ENCODE measurements at regions of chr1 and their contacts with region 1.

Region 1: DNA sequence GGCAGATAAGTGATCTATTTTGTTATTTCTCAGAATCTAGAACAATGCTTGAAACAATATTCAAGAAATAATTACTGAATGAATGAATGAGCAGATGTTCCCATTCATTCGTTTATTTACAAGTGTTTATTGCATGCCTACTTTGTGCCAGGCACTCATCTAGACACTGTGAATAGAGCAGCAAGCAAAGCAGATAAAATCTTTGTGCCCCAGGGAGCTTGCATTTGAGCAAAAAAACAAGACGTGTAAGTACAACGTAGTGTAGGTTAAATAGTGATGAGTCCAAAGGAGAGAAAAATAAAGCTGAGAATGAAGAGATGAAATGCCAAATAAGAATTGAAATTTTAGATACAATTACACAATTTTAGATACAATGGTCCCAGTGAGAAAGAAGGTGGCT is 23.8 kb upstream of the PLPPR5 start:
- DNase-seq: no peak
- ATAC-seq: no peak
- H3K4me3 ChIP-seq: no peak overlapping the region
- H3K27ac ChIP-seq: no peak overlapping the region
- H3K4me1 ChIP-seq: no peaks in the 10 kb centered on the region
- H3K27me3 ChIP-seq: peaks cover 0 to 11% (median 0%) of the 10 kb centered on the region in 9 donors
- CTCF ChIP-seq: no peak
- POLR2A ChIP-seq: no peak

Region 2: DNA sequence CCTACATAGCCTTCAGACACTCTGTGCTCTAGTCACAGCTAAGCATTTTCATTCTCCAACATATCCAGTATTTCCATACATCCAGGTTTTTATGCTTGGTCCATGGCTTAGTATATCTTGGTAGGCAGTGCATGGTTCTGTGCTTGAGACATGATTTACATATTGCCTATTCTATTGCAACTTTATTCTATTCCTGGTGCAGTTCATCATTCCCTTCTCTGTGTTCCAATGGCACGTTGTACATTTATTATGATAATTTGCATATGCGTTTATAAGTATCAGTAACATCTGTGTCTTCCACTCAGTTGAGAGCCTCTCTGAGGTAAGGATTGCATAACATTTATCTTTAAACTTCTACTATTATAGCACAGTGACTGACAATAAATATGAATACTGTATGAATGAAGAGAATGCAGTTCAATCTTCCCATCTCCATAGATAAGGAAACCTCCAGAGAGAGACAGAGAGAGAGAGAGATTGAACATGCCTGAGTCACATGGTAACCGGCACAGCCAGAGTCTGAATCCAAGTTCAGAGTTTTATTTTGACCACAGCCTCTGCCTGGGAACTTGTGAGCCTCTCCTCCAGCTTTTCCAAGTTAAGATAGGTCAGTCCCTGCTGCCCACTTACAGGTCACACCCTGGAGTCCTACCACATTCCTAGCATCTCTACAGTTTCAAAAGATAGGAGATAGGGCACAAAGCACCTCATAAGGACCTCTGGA is 65.2 kb before region 1 on chr1:
- intact Hi-C with region 1: loop called in 1 of 10 experiments (anchors 10 kb)
- DNase-seq: no peak
- ATAC-seq: no peak
- H3K4me3 ChIP-seq: no peak overlapping the region
- H3K27ac ChIP-seq: no peak overlapping the region
- H3K4me1 ChIP-seq: no peaks in the 10 kb centered on the region
- H3K27me3 ChIP-seq: peaks cover 0 to 8% (median 0%) of the 10 kb centered on the region in 9 donors
- CTCF ChIP-seq: no peak
- POLR2A ChIP-seq: no peak